IMR-90 (cell line): ENCODE measurements at regions of chr3 and their contacts with region 1.

Region 1: GRCh38 chr3:113552851-113553250 is 20.5 kb downstream of the SIDT1 start:
- DNase-seq: no peak
- ATAC-seq: no peak
- H3K4me3 ChIP-seq: no peak overlapping the region
- H3K27ac ChIP-seq: no peak overlapping the region
- H3K4me1 ChIP-seq: no peaks in the 10 kb centered on the region
- H3K27me3 ChIP-seq: peaks cover 10% of the 10 kb centered on the region
- CTCF ChIP-seq: no peak
- POLR2A ChIP-seq: no peak
- RAD21 ChIP-seq: no peak

Region 2: DNA sequence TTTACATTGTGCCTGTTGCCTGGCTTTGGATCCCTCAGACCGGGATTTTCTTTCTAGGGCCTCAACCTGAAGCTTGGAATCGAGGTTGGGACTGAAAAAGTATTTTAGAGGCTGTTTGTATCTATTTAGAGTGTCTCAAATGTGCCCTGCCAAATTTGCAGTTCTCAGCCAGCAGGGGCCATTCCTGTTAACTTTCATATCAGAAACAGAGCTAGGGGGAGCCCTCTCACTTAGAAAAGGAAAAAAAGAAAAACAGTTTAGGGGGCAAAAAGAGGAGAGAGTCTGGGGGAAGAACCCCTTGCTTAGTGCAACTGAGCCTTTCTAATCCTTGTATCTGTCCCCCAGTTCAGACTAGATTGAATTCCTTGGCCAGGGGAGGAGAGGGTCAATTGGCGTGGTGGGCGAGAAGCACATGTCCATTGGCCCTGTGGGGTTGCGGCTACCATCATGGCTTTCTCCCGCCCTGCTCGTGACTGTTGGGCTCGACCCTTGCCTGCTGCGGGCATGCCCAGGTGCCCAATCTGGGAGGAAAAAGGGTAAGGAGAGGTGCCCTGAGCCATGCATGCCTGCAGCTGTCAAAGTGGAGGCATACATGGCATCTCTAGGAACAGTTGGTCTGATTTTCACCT is 213.1 kb before region 1 on chr3:
- CTCF ChIA-PET with region 1: no interaction called
- POLR2A ChIA-PET with region 1: no interaction called
- dilution Hi-C with region 1: no loop called
- in situ Hi-C with region 1: no loop called
- intact Hi-C with region 1: loop called (anchors 10 kb)
- DNase-seq: no peak
- ATAC-seq: no peak
- H3K4me3 ChIP-seq: no peak overlapping the region
- H3K27ac ChIP-seq: no peak overlapping the region
- H3K4me1 ChIP-seq: no peaks in the 10 kb centered on the region
- H3K27me3 ChIP-seq: no peaks in the 10 kb centered on the region
- CTCF ChIP-seq: 0 out of 2 replicates have a peak, but pooled peaks have one; percentile 16
- POLR2A ChIP-seq: no peak
- RAD21 ChIP-seq: no peak

Region 3: DNA sequence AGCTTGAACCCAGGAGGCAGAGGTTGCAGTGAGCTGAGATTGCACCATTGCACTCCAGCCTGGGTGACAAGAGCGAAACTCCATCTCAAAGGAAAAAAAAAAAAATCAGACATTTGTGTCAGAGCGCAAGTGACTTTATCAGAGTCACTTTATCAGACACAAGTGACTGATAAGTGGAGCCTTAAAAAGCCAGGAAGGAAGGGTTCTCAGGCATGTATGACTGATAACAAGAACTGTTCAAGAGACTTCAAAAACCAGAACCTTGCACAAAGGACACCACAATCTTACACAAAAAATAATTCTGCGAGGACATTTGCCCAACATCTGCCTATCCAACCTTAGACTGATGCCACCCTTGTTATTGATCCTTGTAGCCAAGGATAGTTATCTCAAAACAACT is 98.2 kb before region 1 on chr3:
- CTCF ChIA-PET with region 1: no interaction called
- POLR2A ChIA-PET with region 1: no interaction called
- dilution Hi-C with region 1: no loop called
- in situ Hi-C with region 1: no loop called
- intact Hi-C with region 1: no loop called
- DNase-seq: no peak
- ATAC-seq: no peak
- H3K4me3 ChIP-seq: no peak overlapping the region
- H3K27ac ChIP-seq: no peak overlapping the region
- H3K4me1 ChIP-seq: no peaks in the 10 kb centered on the region
- H3K27me3 ChIP-seq: no peaks in the 10 kb centered on the region
- CTCF ChIP-seq: no peak
- POLR2A ChIP-seq: no peak
- RAD21 ChIP-seq: no peak